Left colon (tissue), 2 donors: ENCODE measurements at regions of chr18 and their contacts with region 1.

Region 1: GRCh38 chr18:9147440-9148202 is 11.0 kb downstream of the ANKRD12 start:
- DNase-seq: no peak
- ATAC-seq: peak; percentile 92

Region 2: GRCh38 chr18:9017170-9017904 is 130.3 kb before region 1 on chr18:
- intact Hi-C with region 1: no loop called
- DNase-seq: peak; percentile 54 to 57
- ATAC-seq: peak; percentile 62

Region 3: DNA sequence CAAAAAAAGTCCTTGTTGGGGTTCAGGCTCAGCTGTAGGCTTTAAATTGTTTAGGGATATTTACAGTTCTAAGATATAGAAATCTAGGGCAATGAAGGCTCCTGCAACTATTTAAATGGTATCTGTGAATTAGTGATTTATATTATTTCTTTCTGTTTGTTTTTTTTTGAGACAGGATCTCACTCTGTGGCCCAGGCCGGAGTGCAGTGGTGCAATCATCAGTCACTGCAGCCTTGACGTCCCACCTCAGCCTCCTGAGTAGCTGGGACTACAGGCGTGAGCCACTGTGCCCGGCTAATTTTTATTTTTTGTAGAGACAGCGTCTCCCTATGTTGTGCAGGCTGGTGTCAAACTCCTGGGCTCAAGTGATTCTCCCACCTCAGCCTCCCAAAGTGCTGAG is 77.4 kb before region 1 on chr18:
- intact Hi-C with region 1: loop called (anchors 5 to 10 kb)
- DNase-seq: no peak
- ATAC-seq: no peak

Region 4: GRCh38 chr18:9079818-9080528 is 67.6 kb before region 1 on chr18:
- intact Hi-C with region 1: loop called in 1 of 2 experiments (anchors 10 kb)
- DNase-seq: no peak
- ATAC-seq: no peak